ENCODE measurements at regions of chr16 and their contacts with region 1.

Region 1: GRCh38 chr16:80526425-80527061 is 14.2 kb upstream of the DYNLRB2 start:
- DNase-seq: peak; percentile 43
- H3K4me3 ChIP-seq: no peak overlapping the region
- H3K27ac ChIP-seq: no peak overlapping the region
- H3K4me1 ChIP-seq: no peaks in the 10 kb centered on the region
- H3K27me3 ChIP-seq: no peaks in the 10 kb centered on the region
- CTCF ChIP-seq: peak; percentile 84 to 94

Region 2: DNA sequence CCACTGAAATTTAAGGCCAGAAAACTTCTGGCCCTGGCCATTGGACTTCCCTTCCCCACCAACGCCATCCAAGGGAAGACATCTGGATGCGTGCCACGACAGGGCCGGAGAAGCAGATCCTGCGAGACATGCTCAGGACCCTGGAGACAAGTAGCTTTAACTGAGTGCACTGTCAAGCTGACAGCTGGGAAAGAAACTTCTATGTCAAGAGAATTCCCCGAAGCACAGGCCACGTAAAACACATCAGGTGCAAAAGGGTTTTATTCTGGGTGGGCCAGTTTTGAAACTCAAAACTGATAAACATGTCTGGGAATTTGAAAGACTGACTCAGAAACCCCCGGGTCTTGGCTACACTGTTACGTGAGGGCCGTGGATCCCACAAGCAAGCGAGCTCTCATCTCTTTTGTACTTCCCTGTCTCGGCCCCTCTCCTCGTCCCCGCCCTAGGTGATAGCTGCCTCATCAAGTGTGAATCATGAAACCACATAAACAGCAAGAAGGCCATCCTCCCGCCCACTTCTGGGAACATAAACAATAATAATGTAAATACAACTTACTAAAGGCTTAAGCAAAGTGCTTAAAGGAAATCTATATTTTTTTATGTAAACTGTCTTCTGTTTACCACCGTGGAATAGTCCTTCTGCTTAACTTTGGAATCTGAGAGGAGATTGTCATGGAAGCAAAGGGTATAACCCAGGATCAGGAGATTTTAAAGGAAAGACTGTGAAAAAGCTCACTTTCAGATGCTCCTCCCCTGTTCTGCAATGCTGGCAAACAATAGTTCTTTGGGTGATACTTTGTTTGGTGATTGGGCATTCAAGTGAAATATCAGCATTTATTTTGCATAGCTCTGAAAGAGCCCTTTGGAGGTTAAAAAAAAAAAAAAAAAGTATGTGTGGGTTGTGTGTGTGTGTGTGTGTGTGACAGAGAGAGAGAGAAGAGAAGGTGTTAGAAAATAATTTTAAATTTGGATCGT is 520.0 kb before region 1 on chr16:
- CTCF ChIA-PET with region 1: no interaction called
- dilution Hi-C with region 1: no loop called
- in situ Hi-C with region 1: no loop called
- intact Hi-C with region 1: loop called (anchors 10 kb)
- DNase-seq: peak; percentile 49
- H3K4me3 ChIP-seq: no peak overlapping the region
- H3K27ac ChIP-seq: no peak overlapping the region
- H3K4me1 ChIP-seq: peaks cover 8% of the 10 kb centered on the region
- H3K27me3 ChIP-seq: no peaks in the 10 kb centered on the region
- CTCF ChIP-seq: no peak

Region 3: DNA sequence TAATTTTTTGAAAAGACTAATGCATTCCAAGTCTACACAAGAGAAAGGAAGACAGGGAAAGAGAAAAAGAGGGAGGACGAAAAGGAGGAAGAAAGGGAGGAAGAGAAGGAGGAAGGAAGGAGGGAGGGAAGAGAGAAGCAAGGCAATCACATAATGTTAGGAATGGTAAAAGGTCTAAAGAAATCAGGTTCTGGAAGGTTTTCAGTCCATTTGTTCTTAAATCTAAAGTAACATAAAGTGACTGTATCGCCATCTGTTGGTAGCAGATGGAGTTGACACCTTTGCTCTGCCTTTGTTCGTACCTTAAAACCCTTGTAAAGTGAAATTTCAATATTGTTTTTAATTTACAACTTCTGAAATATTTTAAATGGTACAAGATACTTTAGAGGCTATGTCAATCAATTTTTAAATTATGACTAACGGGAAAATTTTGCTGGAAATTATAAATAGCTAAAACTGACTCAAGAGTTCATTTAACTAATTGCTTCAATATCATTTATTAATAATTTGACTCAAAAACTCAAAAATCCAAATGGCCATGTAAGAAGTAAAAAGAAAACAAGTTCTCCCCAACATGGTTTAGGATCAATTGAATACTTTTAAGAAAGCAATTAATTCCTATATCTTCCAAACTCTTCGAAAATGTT is 298.3 kb after region 1 on chr16:
- CTCF ChIA-PET with region 1: no interaction called
- dilution Hi-C with region 1: no loop called
- in situ Hi-C with region 1: loop called in 1 of 2 experiments (anchors 25 kb)
- intact Hi-C with region 1: loop called (anchors 1 kb)
- DNase-seq: peak; percentile 24
- H3K4me3 ChIP-seq: no peak overlapping the region
- H3K27ac ChIP-seq: no peak overlapping the region
- H3K4me1 ChIP-seq: no peaks in the 10 kb centered on the region
- H3K27me3 ChIP-seq: no peaks in the 10 kb centered on the region
- CTCF ChIP-seq: peak; percentile 69 to 75